OCI-LY7 (cell line): ENCODE measurements at regions of chr17 and their contacts with region 1.

Region 1: GRCh38 chr17:75667021-75667790 is at the starts of genes RECQL5 and SAP30BP:
- DNase-seq: peak; percentile 100
- H3K4me3 ChIP-seq: peak within 1 kb of the TSS; percentile 84
- H3K27ac ChIP-seq: peak within 1 kb of the TSS; percentile 94
- H3K4me1 ChIP-seq: peaks cover 54% of the 10 kb centered on the region
- CTCF ChIP-seq: no peak
- total RNA-seq, gene RECQL5: 90.0 and 91.9 TPM in 2 replicates
- total RNA-seq, gene SAP30BP: 122 and 127 TPM in 2 replicates

Region 2: GRCh38 chr17:75576661-75577060 is 90.5 kb before region 1 on chr17:
- CTCF ChIA-PET with region 1: no interaction called
- POLR2A ChIA-PET with region 1: no interaction called
- intact Hi-C with region 1: no loop called
- DNase-seq: no peak
- H3K4me3 ChIP-seq: no peak overlapping the region
- H3K27ac ChIP-seq: no peak overlapping the region
- H3K4me1 ChIP-seq: peaks cover 2% of the 10 kb centered on the region
- CTCF ChIP-seq: no peak

Region 3: GRCh38 chr17:75632863-75633485 is 34.2 kb before region 1 on chr17 and contains the start of gene SMIM5:
- CTCF ChIA-PET with region 1: interaction called, 3 read pairs
- POLR2A ChIA-PET with region 1: interaction called, 4 read pairs
- intact Hi-C with region 1: loop called (anchors 5 kb)
- DNase-seq: peak; percentile 87
- H3K4me3 ChIP-seq: no peak within 1 kb of the TSS
- H3K27ac ChIP-seq: peak within 1 kb of the TSS; percentile 23
- H3K4me1 ChIP-seq: peaks cover 22% of the 10 kb centered on the region
- CTCF ChIP-seq: peak; percentile 99
- total RNA-seq, gene SMIM5: 0.06 TPM in 1 of 2 replicates, not detected in the other

Region 4: GRCh38 chr17:75689441-75689873 is 22.3 kb after region 1 on chr17:
- CTCF ChIA-PET with region 1: interaction called, 6 read pairs
- POLR2A ChIA-PET with region 1: interaction called, 7 read pairs
- intact Hi-C with region 1: loop called (anchors 1 kb)
- DNase-seq: peak; percentile 98
- H3K4me3 ChIP-seq: peak overlapping the region; percentile 53
- H3K27ac ChIP-seq: peak overlapping the region; percentile 97
- H3K4me1 ChIP-seq: peaks cover 69% of the 10 kb centered on the region
- CTCF ChIP-seq: no peak